Head of caudate nucleus (tissue), 42 donors: ENCODE measurements at regions of chr3 and their contacts with region 1.

Region 1: GRCh38 chr3:64533617-64534317 is 154.0 kb downstream of the ADAMTS9 start:
- DNase-seq: peak; percentile 76 to 95 (median 86)

Region 2: GRCh38 chr3:64392001-64392400 is 141.8 kb before region 1 on chr3:
- intact Hi-C with region 1: no loop called
- DNase-seq: no peak

Region 3: GRCh38 chr3:65732051-65732935 is 1198.5 kb after region 1 on chr3:
- intact Hi-C with region 1: loop called (anchors 10 kb)
- DNase-seq: peak in 19 of 42 donors; percentile 10 to 80 (median 47)

Region 4: GRCh38 chr3:66195347-66195783 is 1661.6 kb after region 1 on chr3:
- intact Hi-C with region 1: loop called (anchors 5 kb)
- DNase-seq: peak; percentile 61 to 89 (median 79)